ENCODE measurements at regions of chr7 and their contacts with region 1.

Region 1: GRCh38 chr7:115124409-115124942 is 202.6 kb downstream of the MDFIC start:
- DNase-seq: peak; percentile 69
- H3K4me3 ChIP-seq: no peak overlapping the region
- H3K27ac ChIP-seq: no peak overlapping the region
- H3K4me1 ChIP-seq: peaks cover 39% of the 10 kb centered on the region
- H3K27me3 ChIP-seq: no peaks in the 10 kb centered on the region
- CTCF ChIP-seq: no peak

Region 2: GRCh38 chr7:114622221-114622620 is 502.3 kb before region 1 on chr7:
- CTCF ChIA-PET with region 1: no interaction called
- POLR2A ChIA-PET with region 1: no interaction called
- intact Hi-C with region 1: no loop called
- DNase-seq: no peak
- H3K4me3 ChIP-seq: no peak overlapping the region
- H3K27ac ChIP-seq: no peak overlapping the region
- H3K4me1 ChIP-seq: no peaks in the 10 kb centered on the region
- H3K27me3 ChIP-seq: peaks cover 55% of the 10 kb centered on the region
- CTCF ChIP-seq: no peak

Region 3: GRCh38 chr7:114930829-114931655 is 193.4 kb before region 1 on chr7:
- CTCF ChIA-PET with region 1: no interaction called
- POLR2A ChIA-PET with region 1: no interaction called
- intact Hi-C with region 1: loop called (anchors 5 kb)
- DNase-seq: peak; percentile 66
- H3K4me3 ChIP-seq: peak overlapping the region; percentile 1
- H3K27ac ChIP-seq: peak overlapping the region; percentile 70
- H3K4me1 ChIP-seq: peaks cover 66% of the 10 kb centered on the region
- H3K27me3 ChIP-seq: no peaks in the 10 kb centered on the region
- CTCF ChIP-seq: no peak

Region 4: DNA sequence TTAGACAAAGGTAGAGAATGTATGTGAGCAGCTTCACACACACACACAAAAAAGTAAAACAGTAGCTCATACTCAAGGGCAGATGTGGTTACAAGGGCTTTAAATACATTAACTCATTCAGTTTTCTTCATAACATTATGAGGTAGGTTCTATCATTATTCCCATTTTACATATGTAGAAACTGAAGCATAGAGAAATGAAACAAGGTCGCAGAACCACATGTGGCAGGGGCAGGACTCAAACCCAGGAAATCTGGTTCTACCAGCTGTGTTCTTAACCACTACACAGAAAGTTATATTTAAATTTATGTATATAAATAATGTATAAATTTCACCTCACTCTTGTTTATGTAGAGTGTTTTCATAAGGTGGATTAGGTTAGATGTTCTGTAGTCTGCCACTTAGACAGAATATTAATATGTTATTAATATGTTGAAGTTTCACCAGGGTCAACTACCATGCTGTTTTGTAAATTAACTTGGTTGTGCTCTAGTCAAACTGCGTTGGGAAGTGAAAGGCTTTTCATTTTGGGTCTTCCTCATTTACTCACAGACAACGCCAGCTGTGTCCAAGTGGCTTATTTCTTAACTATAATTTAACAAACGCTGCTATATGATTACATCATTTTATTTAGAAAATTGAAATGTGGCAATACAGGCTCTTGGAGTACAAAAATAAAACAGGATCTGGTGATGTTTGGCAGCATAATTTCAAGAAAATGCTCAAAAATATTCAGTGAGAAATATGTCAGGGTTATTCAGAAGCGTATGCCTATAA is 64.2 kb before region 1 on chr7:
- CTCF ChIA-PET with region 1: no interaction called
- POLR2A ChIA-PET with region 1: no interaction called
- intact Hi-C with region 1: no loop called
- DNase-seq: no peak
- H3K4me3 ChIP-seq: no peak overlapping the region
- H3K27ac ChIP-seq: no peak overlapping the region
- H3K4me1 ChIP-seq: no peaks in the 10 kb centered on the region
- H3K27me3 ChIP-seq: no peaks in the 10 kb centered on the region
- CTCF ChIP-seq: no peak

Region 5: GRCh38 chr7:115379321-115379720 is 254.8 kb after region 1 on chr7:
- CTCF ChIA-PET with region 1: no interaction called
- POLR2A ChIA-PET with region 1: no interaction called
- intact Hi-C with region 1: no loop called
- DNase-seq: no peak
- H3K4me3 ChIP-seq: no peak overlapping the region
- H3K27ac ChIP-seq: no peak overlapping the region
- H3K4me1 ChIP-seq: no peaks in the 10 kb centered on the region
- H3K27me3 ChIP-seq: no peaks in the 10 kb centered on the region
- CTCF ChIP-seq: no peak

Measured in A673 (cell line).